Caco-2 (cell line): ENCODE measurements at regions of chr5 and their contacts with region 1.

Region 1: DNA sequence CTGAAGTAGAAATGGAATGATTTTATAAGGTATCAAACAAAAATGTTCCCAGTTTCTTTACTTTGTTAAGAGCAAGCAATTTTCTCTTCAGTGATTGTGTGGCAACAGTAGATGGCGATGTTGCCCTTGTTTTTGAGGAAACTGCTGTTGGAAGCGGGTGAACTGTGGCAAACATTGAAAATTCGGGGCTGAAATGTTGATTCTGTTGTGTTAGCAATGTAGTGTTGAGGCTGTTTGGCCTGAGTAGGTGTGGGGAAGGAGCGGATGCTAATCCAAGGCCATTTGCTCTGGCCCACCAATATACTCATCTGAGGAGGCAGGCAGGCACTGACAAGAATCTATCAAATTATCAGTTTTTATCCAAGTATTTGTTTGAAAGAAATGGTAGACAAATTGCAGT is 129.8 kb downstream of the SLC12A2 start:
- DNase-seq: peak; percentile 60 to 69
- H3K4me3 ChIP-seq: no peak overlapping the region
- H3K4me3 Mint-ChIP-seq: no peak overlapping the region
- H3K27ac Mint-ChIP-seq: no peak overlapping the region
- H3K4me1 ChIP-seq: no peaks in the 10 kb centered on the region
- H3K4me1 Mint-ChIP-seq: no peaks in the 10 kb centered on the region
- H3K27me3 ChIP-seq: no peaks in the 10 kb centered on the region
- H3K27me3 Mint-ChIP-seq: no peaks in the 10 kb centered on the region
- CTCF ChIP-seq: peak; percentile 74 to 87

Region 2: GRCh38 chr5:128358826-128359225 is 145.5 kb after region 1 on chr5:
- CTCF ChIA-PET with region 1: no interaction called
- POLR2A ChIA-PET with region 1: no interaction called
- intact Hi-C with region 1: loop called (anchors 10 kb)
- DNase-seq: no peak
- H3K4me3 ChIP-seq: no peak overlapping the region
- H3K4me3 Mint-ChIP-seq: peak overlapping the region; percentile 52
- H3K27ac Mint-ChIP-seq: no peak overlapping the region
- H3K4me1 ChIP-seq: peaks cover 17% of the 10 kb centered on the region
- H3K4me1 Mint-ChIP-seq: peaks cover 18% of the 10 kb centered on the region
- H3K27me3 ChIP-seq: no peaks in the 10 kb centered on the region
- H3K27me3 Mint-ChIP-seq: no peaks in the 10 kb centered on the region
- CTCF ChIP-seq: no peak

Region 3: GRCh38 chr5:128498844-128499455 is 285.6 kb after region 1 on chr5:
- CTCF ChIA-PET with region 1: no interaction called
- POLR2A ChIA-PET with region 1: no interaction called
- intact Hi-C with region 1: loop called (anchors 1 kb)
- DNase-seq: peak in 1 of 2 experiments; percentile 35
- H3K4me3 ChIP-seq: no peak overlapping the region
- H3K4me3 Mint-ChIP-seq: no peak overlapping the region
- H3K27ac Mint-ChIP-seq: no peak overlapping the region
- H3K4me1 ChIP-seq: no peaks in the 10 kb centered on the region
- H3K4me1 Mint-ChIP-seq: no peaks in the 10 kb centered on the region
- H3K27me3 ChIP-seq: no peaks in the 10 kb centered on the region
- H3K27me3 Mint-ChIP-seq: no peaks in the 10 kb centered on the region
- CTCF ChIP-seq: peak; percentile 51 to 64

Region 4: DNA sequence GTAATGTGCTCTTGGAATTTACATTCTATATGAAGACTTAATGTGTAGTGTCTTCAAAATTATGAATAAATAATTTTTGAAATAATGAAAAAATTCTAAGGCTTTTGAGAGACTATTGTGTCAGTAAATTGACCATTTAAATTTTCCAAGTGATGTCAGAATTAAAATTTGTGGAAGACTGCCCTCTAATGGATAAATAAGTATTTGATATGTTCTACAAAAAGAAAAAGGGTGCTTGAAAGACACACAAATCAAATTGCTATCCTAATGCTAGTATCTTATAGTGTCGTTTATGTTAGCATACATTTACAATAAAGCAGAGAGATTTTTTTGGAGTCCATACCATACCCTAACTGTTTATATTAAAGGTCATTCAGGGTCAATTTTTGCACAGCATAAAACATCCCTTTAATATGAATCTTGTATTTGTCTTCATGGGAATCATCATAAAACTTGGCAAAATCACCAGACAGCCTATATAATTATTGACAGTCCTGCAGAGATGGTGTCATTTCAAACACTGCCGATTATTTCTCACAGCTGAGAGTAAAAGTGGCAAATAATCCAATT is 631.1 kb after region 1 on chr5:
- CTCF ChIA-PET with region 1: no interaction called
- POLR2A ChIA-PET with region 1: no interaction called
- intact Hi-C with region 1: loop called (anchors 1 kb)
- DNase-seq: no peak
- H3K4me3 ChIP-seq: no peak overlapping the region
- H3K4me3 Mint-ChIP-seq: no peak overlapping the region
- H3K27ac Mint-ChIP-seq: no peak overlapping the region
- H3K4me1 ChIP-seq: no peaks in the 10 kb centered on the region
- H3K4me1 Mint-ChIP-seq: no peaks in the 10 kb centered on the region
- H3K27me3 ChIP-seq: no peaks in the 10 kb centered on the region
- H3K27me3 Mint-ChIP-seq: no peaks in the 10 kb centered on the region
- CTCF ChIP-seq: peak in 1 of 2 experiments; percentile 29

Region 5: GRCh38 chr5:129135633-129136032 is 922.3 kb after region 1 on chr5:
- CTCF ChIA-PET with region 1: no interaction called
- POLR2A ChIA-PET with region 1: no interaction called
- intact Hi-C with region 1: loop called (anchors 1 kb)
- DNase-seq: peak; percentile 42 to 46
- H3K4me3 ChIP-seq: no peak overlapping the region
- H3K4me3 Mint-ChIP-seq: no peak overlapping the region
- H3K27ac Mint-ChIP-seq: no peak overlapping the region
- H3K4me1 ChIP-seq: no peaks in the 10 kb centered on the region
- H3K4me1 Mint-ChIP-seq: no peaks in the 10 kb centered on the region
- H3K27me3 ChIP-seq: no peaks in the 10 kb centered on the region
- H3K27me3 Mint-ChIP-seq: no peaks in the 10 kb centered on the region
- CTCF ChIP-seq: peak; percentile 32 to 44